ENCODE measurements at regions of chr2 and their contacts with region 1.

Region 1: GRCh38 chr2:237731663-237732062 is 66.9 kb upstream of the RBM44 start:
- DNase-seq: peak; percentile 66
- H3K4me3 Mint-ChIP-seq: no peak overlapping the region
- H3K27ac Mint-ChIP-seq: peak overlapping the region; percentile 17
- H3K4me1 Mint-ChIP-seq: peaks cover 46% of the 10 kb centered on the region
- H3K27me3 Mint-ChIP-seq: no peaks in the 10 kb centered on the region

Region 2: DNA sequence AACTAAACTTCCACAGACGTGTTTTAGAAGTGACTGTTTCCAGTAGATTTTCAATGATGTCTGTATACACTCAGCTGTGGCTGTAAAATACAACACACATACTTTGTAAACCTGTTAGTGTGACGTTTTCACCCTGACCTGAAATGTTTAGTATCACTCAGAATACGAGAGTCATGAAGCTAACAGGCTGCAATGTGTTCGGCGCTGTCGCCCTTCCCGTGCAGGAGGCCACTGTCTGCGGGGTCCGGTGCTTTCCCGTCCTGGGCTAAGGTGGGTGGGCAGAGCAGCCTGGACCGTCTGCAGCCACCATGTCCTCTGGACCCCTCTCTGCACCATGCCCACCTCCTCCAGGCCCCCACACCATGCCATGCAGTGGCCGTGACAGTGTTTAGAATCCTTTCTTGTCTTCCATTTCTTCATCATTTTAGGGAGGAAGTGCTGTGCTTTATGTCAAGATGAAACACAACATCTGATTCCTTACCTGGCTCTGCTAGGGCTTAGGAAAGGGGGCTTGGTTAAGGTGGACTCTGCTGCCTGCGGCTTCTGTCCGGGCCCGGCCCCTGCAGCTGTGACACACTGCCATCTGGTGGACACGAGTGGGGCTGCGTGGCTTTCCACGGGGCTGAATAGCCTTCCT is 13.1 kb after region 1 on chr2:
- CTCF ChIA-PET with region 1: interaction called, 13 read pairs
- intact Hi-C with region 1: no loop called
- DNase-seq: peak; percentile 86
- H3K4me3 Mint-ChIP-seq: no peak overlapping the region
- H3K27ac Mint-ChIP-seq: peak overlapping the region; percentile 76
- H3K4me1 Mint-ChIP-seq: peaks cover 36% of the 10 kb centered on the region
- H3K27me3 Mint-ChIP-seq: no peaks in the 10 kb centered on the region